HepG2 (cell line): ENCODE measurements at regions of chr2 and their contacts with region 1.

Region 1: DNA sequence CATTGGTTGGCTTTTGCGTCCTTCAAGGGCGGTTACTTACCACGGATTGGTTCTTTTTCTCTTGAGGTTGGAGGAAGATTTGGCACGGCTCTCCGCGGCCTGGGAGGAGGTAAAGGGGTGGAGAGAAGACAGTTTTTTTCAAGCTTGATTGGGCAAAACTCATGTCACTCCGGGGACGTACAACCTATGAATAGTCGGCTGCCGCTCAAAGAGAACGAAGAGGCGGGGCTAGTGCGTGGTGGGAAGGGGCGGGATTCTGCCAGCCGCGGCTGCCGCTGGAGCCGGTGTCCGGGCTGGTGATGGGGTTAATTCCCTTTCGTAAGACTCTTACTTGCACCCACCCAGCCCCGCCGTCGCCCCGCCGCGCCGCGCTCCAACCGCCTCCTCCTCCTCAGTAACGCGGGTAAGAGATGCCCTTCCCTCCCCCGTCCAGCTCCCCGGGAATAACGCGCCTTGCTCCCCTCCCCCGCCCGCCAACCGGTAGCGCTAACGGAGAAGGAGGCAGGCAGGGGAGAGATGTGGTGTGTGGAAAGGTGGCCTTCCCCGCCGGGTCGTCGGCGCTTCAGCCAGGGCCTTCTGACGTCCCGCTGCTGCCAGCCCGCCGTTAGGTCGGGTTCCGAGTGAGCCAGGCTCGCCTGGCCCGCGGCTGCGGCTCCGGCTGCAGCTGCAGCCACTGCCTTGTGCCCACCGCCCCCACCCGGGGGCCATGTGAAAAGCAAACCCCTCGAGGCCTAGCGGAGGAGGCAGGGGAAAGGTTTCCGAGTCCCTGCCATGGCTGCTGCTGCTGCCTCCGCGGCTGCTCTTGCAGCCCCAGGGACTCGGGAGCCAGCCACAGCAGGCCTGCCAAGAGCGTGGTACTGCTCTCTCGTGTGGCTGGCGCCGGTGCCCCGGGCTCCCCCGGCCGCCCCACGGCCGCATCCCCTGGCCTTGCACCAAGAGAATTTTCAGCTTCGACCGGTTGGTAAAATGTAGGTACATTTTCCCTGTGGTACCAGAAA is at the start of gene R3HDM1:
- DNase-seq: peak; percentile 100
- ATAC-seq: peak; percentile 89
- H3K4me3 ChIP-seq: peak within 1 kb of the TSS; percentile 76 to 94 (median 87)
- H3K27ac ChIP-seq: peak within 1 kb of the TSS; percentile 95
- H3K4me1 ChIP-seq: peaks cover 57% of the 10 kb centered on the region
- H3K27me3 ChIP-seq: no peaks in the 10 kb centered on the region; a peak in 1 of 5 replicates
- CTCF ChIP-seq: peak; percentile 73
- EP300 ChIP-seq: no peak
- POLR2A ChIP-seq: peak; percentile 64 to 69
- RAD21 ChIP-seq: peak; percentile 81
- total RNA-seq, gene R3HDM1: 15.7 and 20.3 TPM in 2 replicates

Region 2: DNA sequence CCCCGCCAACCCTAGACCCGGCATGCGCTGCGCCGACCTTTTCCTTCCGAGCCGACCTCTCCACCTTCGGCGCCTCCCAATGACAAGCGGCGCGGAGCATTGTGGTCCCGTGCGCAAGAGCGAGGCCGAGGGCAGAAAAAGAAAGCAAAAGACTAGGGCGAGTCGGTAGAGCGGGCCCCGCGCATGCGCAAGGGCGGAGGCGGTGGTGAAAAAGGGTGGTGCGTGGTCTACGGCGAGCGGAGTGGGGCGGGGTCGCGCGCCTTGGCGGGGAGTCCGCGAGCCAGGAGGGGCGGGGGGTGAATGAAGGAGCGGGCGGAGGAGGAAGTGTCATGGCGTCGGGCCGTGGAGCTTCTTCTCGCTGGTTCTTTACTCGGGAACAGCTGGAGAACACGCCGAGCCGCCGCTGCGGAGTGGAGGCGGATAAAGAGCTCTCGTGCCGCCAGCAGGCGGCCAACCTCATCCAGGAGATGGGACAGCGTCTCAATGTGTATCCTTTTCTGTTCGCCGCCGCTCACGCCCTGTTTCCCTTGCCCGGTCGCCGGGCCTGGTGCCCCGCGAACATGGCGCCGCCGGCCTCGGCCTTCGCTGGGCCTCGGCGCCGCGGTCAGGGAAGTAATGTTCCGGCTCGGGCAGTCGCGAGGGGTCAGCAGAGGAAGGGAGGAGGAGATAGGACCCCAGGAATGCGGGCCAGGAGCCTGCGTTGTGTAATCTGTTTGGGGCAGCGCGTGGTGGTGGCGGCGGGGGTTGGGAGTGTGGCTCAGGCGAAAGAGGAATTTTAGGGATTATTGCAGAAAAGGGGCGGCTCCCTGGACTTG is 612.8 kb before region 1 on chr2 and contains the start of gene CCNT2:
- CTCF ChIA-PET with region 1: no interaction called
- POLR2A ChIA-PET with region 1: interaction called, 15 read pairs
- in situ Hi-C with region 1: no loop called
- intact Hi-C with region 1: loop called (anchors 5 kb)
- DNase-seq: peak; percentile 99
- ATAC-seq: peak; percentile 88
- H3K4me3 ChIP-seq: peak within 1 kb of the TSS; percentile 77 to 100 (median 96)
- H3K27ac ChIP-seq: peak within 1 kb of the TSS; percentile 99
- H3K4me1 ChIP-seq: peaks cover 41% of the 10 kb centered on the region
- H3K27me3 ChIP-seq: no peaks in the 10 kb centered on the region; a peak in 1 of 5 replicates
- CTCF ChIP-seq: 0 out of 2 replicates have a peak, but pooled peaks have one; percentile 17
- EP300 ChIP-seq: peak in 1 of 2 experiments; percentile 3; a peak in 2 of 4 replicates
- POLR2A ChIP-seq: peak; percentile 84 to 87
- RAD21 ChIP-seq: peak; percentile 39; the same call in 1 of the 2 replicates
- total RNA-seq, gene CCNT2: 31.2 and 34.4 TPM in 2 replicates

Region 3: DNA sequence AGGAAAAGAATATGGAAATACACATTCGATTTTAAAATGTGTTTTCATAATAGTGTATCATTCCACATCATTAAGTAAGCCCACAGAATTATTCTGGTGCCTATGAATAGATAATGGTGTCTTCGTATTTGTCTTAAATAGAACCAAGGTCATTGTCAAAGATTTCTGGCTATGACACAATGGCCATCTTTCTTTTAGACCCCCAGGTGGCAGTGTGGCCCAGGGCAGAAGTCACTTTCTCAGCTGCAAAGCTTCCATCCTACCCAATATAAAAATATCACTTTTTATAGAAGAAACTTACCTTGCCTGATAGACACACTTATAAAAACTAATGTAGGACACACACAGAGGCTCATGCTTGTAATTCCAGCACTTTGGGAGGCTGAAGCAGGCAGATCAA is 58.0 kb before region 1 on chr2:
- CTCF ChIA-PET with region 1: no interaction called
- POLR2A ChIA-PET with region 1: interaction called, 7 read pairs
- in situ Hi-C with region 1: no loop called
- intact Hi-C with region 1: loop called (anchors 5 kb)
- DNase-seq: peak; percentile 57
- ATAC-seq: peak; percentile 87
- H3K4me3 ChIP-seq: no peak overlapping the region
- H3K27ac ChIP-seq: no peak overlapping the region
- H3K4me1 ChIP-seq: no peaks in the 10 kb centered on the region
- H3K27me3 ChIP-seq: no peaks in the 10 kb centered on the region
- CTCF ChIP-seq: peak; percentile 74
- EP300 ChIP-seq: no peak
- POLR2A ChIP-seq: no peak
- RAD21 ChIP-seq: peak; percentile 69

Region 4: GRCh38 chr2:135709992-135710391 is 178.5 kb after region 1 on chr2:
- CTCF ChIA-PET with region 1: no interaction called
- POLR2A ChIA-PET with region 1: interaction called, 7 read pairs
- in situ Hi-C with region 1: no loop called
- intact Hi-C with region 1: loop called (anchors 1 kb)
- DNase-seq: peak; percentile 44
- ATAC-seq: peak; percentile 87
- H3K4me3 ChIP-seq: no peak overlapping the region
- H3K27ac ChIP-seq: no peak overlapping the region
- H3K4me1 ChIP-seq: no peaks in the 10 kb centered on the region
- H3K27me3 ChIP-seq: no peaks in the 10 kb centered on the region
- CTCF ChIP-seq: peak; percentile 90
- EP300 ChIP-seq: no peak
- POLR2A ChIP-seq: no peak
- RAD21 ChIP-seq: peak; percentile 77

Region 5: DNA sequence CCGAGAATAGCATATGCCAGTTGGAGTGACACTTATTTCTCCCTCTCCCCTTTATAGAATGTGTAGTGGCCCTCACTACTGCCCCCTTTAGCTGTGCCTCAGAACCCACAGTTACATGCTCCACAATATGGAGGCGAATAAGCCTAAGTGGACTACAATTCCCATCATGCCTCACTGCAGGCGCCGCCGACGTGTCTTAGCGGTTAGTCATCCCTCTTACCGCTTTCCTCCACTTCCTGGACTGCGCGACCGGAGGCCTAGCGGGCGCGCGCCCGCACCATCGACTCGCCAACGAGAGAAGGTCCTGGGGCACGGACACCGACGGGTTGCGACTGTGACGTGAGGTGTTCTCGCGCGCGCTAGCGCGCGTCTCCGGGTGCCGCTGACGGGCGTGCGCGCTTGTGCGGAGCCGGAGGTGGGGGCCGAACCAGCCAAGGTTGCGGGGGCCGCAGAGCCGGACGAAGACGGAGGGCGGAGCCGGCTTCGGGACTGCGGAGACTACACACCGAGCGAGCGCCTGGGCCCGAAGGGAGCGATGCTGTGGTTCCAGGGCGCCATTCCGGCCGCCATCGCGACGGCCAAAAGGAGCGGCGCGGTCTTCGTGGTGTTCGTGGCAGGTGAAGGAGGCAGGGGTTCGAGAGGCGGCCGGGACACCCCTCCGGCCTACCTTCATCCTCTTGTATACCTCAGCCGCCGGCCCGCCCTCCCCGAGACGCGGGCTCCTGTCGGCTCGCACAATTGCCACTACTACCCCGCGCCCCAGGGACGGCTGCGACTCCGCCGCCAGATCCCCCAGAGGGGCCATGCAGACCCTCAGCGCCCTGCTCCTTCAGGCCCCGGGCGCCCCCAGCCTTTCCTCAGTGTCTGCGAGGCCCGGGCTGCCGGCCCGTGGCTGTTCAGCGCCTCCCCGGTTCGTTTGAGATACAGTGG is 210.1 kb after region 1 on chr2 and contains the start of gene UBXN4:
- CTCF ChIA-PET with region 1: no interaction called
- POLR2A ChIA-PET with region 1: interaction called, 5 read pairs
- in situ Hi-C with region 1: no loop called
- intact Hi-C with region 1: loop called (anchors 2 kb)
- DNase-seq: peak; percentile 99
- ATAC-seq: peak; percentile 93
- H3K4me3 ChIP-seq: peak within 1 kb of the TSS; percentile 85 to 98 (median 95)
- H3K27ac ChIP-seq: peak within 1 kb of the TSS; percentile 93
- H3K4me1 ChIP-seq: peaks cover 27% of the 10 kb centered on the region
- H3K27me3 ChIP-seq: no peaks in the 10 kb centered on the region; a peak in 1 of 5 replicates
- CTCF ChIP-seq: peak; percentile 79
- EP300 ChIP-seq: no peak; a peak in 1 of 4 replicates
- POLR2A ChIP-seq: peak; percentile 97 to 98
- RAD21 ChIP-seq: peak; percentile 49
- total RNA-seq, gene UBXN4: 74.2 and 75.1 TPM in 2 replicates